Mammary epithelial cell (primary cell): ENCODE measurements at regions of chr11 and their contacts with region 1.

Region 1: DNA sequence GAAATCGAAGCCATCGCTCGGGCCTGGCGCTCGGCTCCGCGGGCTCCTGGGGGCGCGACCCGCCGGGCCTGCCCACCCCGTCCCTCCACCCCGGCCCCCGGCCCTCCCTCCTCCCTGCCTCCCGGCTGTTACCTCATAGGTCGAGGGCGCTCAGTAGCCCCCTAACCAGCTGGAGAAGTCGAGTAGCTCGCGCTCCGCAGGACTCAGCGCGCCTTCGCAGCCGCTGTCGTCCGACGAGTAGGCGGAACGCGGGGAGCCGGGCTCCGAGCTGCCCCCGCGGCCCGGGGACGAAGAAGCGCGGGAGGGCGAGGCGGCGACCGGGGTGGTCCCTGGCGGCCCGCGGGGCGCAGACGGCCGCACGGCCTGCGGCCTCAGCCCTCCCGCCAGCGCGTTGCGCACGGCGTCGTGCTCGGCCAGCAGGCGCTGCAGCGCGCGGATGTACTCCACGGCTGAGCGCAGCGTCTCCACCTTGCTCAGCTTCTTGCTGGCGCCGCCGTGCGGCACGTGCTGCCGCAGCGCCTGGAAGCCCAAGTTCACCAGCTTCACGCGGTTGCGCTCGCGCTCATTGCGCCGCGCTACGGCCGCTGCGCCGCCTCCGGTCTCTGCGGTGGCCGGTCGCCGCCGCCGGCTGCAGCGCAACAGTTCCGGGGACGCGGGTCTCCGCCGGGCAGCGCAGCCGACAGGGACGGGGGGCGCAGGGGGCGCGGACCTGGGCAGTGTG is 627 bp downstream of the ASCL2 start:
- DNase-seq: peak; percentile 50
- H3K4me3 ChIP-seq: peak overlapping the region; percentile 4 to 33 (median 15)
- H3K27ac ChIP-seq: no peak overlapping the region
- H3K4me1 ChIP-seq: peaks cover 18% of the 10 kb centered on the region
- H3K27me3 ChIP-seq: peaks cover 24% of the 10 kb centered on the region
- CTCF ChIP-seq: peak in 1 of 2 donors; percentile 42

Region 2: DNA sequence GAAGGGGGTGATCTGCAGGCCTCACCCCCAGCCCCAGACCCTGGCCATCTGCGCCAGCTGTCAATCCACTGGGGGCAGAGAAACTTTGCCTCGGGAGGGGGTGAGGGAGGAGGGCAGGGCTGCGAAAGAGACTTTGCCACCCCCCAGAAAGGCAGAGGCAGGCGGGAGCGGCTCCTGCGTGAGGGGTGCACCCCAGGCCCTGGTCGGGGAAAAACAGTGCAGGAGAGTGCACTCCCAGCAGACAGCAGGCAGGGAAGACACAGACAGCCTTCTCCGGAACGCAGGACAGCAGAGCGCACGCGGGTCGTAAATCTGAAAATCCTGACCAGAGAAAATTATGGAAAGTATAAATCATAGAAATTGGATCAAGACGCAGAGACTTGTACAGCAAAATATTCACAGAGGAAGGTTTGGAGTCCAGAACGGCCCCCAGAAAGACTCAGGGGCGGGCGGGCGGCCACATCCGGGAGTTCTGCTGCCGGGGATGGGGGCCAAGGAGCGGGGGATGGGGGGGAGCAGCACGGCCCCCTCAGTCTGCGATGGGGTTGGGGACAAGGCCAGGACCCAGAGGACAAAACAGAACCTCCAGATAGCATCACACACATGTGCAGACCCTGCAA is 330.6 kb before region 1 on chr11:
- CTCF ChIA-PET with region 1: no interaction called
- dilution Hi-C with region 1: no loop called
- in situ Hi-C with region 1: no loop called
- intact Hi-C with region 1: no loop called
- DNase-seq: no peak
- H3K4me3 ChIP-seq: no peak overlapping the region
- H3K27ac ChIP-seq: no peak overlapping the region
- H3K4me1 ChIP-seq: peaks cover 12% of the 10 kb centered on the region
- H3K27me3 ChIP-seq: no peaks in the 10 kb centered on the region
- CTCF ChIP-seq: no peak

Region 3: DNA sequence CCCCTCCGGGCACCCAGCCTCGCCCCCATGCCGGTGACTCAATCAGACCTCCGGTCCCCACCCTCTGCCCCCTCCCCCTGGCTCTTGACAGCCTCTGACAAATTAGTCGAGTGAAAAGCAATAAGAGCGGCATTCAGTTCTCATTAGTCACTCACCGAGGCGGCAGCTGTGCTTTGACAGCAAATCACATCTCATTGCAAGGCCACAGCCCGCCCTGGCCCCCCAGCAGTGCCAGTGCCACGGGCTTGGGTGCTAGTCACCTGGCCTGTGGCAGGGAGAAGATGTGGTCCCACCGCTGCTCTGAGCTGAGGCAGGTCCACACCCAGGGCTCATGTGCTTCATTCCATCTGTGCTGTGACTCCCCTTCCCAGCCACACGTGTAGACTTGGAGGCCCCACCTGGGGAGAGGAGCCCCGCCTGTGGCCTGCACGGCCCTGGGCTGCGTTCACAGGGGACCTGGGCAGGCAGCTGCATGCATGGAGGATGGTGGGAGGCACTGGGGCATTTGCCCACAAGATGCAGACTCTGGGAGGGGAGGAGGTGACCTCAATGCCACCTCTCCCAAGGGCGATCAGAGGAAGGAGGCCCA is 90.8 kb before region 1 on chr11:
- CTCF ChIA-PET with region 1: no interaction called
- dilution Hi-C with region 1: loop called (anchors 5 kb)
- in situ Hi-C with region 1: no loop called
- intact Hi-C with region 1: no loop called
- DNase-seq: peak; percentile 82
- H3K4me3 ChIP-seq: no peak overlapping the region
- H3K27ac ChIP-seq: no peak overlapping the region
- H3K4me1 ChIP-seq: peaks cover 40% of the 10 kb centered on the region
- H3K27me3 ChIP-seq: no peaks in the 10 kb centered on the region
- CTCF ChIP-seq: no peak

Region 4: DNA sequence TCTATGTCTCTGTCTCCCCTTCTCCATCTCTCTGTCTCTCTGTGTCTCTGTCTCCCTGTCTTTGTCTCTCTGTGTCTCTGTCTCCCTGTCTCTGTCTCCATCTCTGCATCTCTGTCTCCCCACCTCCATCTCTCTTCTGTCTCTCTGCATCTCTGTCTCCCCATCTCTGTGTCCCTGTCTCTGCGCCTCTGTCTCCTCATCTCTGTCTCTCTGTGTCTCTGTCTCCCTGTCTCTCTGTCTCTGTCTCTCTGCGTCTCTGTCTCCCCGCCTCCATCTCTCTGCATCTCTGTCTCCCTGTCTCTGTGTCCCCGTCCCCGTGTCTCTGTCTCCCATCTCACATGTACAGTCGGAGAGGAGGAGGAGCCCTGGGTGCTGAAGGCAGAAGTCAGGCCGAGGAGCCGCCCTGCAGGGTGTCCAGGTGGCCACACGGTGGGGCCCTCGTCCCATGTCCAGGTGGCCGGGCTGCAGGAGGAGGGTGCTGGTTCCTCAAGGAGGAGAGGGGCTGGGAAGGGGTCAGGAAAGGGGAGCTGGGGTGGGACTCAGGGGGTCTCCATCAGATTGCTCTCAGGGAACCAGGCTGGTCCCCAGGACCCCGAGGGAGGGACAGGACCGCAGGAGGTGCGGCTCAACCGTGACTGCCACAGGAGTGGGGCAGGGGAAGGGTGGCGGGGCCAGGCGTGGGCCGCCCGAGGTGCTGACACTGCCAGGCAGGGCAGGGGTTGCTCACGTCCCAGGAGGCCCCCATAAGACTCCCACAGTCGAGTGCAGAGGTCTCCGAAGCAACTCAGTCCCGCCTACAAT is 72.6 kb before region 1 on chr11:
- CTCF ChIA-PET with region 1: no interaction called
- dilution Hi-C with region 1: no loop called
- in situ Hi-C with region 1: no loop called
- intact Hi-C with region 1: loop called (anchors 1 kb)
- DNase-seq: peak; percentile 36
- H3K4me3 ChIP-seq: no peak overlapping the region
- H3K27ac ChIP-seq: no peak overlapping the region
- H3K4me1 ChIP-seq: peaks cover 3% of the 10 kb centered on the region
- H3K27me3 ChIP-seq: no peaks in the 10 kb centered on the region
- CTCF ChIP-seq: peak; percentile 92 to 98

Region 5: DNA sequence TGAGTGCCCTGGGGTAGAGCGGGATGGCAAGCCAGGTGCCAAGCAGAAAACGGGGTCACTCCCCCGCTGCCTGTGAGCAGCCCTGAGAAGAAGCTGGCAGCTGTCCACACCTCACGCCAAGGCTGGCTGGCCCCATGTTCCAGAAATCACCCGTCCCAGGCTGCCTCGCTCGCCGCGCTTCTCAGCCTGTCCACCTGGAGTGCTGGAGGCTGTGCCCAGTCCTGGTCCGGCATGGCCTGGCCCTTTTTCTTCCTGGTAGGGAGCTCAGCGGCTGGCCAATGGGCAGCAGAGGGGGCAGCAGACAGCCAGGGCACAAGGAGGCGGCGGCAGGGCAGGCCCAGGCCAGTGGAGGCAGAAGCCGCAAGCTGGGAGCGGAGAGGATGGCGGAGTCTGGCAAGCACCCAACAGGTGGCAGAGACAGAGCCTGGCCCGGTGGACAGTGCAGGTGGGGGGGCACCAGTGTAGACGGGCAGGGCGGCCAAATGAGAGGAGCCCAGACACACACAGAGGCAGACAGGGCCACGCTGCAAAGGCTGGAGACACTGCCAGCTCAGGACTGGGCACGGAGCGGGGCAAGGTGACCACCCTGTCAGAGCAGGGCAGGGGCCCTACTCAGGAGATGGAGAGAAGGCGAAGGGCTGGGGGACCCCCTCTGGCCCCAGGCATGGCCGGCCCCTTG is 60.9 kb before region 1 on chr11:
- CTCF ChIA-PET with region 1: no interaction called
- dilution Hi-C with region 1: no loop called
- in situ Hi-C with region 1: no loop called
- intact Hi-C with region 1: loop called (anchors 2 kb)
- DNase-seq: peak; percentile 48
- H3K4me3 ChIP-seq: no peak overlapping the region
- H3K27ac ChIP-seq: no peak overlapping the region
- H3K4me1 ChIP-seq: peaks cover 18% of the 10 kb centered on the region
- H3K27me3 ChIP-seq: peaks cover 2% of the 10 kb centered on the region
- CTCF ChIP-seq: peak in 1 of 2 donors; percentile 41

Region 6: DNA sequence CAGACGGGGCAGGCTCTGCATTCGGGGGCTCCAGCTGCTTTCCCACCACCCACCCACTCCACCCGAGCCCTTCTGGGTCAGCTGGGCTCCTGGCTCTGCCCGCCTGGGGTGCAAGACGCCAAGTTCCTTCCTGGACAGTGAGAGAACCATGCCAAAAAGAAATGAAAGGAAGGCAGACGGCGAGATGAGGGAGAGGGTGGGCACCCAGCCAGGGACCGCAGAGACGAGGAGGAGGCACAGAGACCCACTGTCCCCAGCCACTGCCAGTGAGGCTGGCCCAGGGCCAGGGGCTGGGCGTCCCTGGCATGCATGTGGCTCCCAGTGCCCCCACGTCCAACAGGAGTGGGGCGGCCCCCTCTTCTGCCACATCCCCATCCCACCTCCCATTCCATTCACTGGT is 96.5 kb after region 1 on chr11:
- CTCF ChIA-PET with region 1: no interaction called
- dilution Hi-C with region 1: loop called (anchors 5 kb)
- in situ Hi-C with region 1: no loop called
- intact Hi-C with region 1: no loop called
- DNase-seq: no peak
- H3K4me3 ChIP-seq: no peak overlapping the region
- H3K27ac ChIP-seq: no peak overlapping the region
- H3K4me1 ChIP-seq: no peaks in the 10 kb centered on the region
- H3K27me3 ChIP-seq: peaks cover 2% of the 10 kb centered on the region
- CTCF ChIP-seq: no peak